ENCODE measurements at regions of chr16 and their contacts with region 1.

Region 1: GRCh38 chr16:75402821-75403475 is 30.4 kb downstream of the CFDP1 start:
- DNase-seq: peak in 3 of 35 experiments; percentile 6 to 55 (median 7)
- ATAC-seq: no peak
- H3K4me3 ChIP-seq: no peak overlapping the region
- H3K4me3 Mint-ChIP-seq: no peak overlapping the region
- H3K27ac ChIP-seq: no peak overlapping the region
- H3K27ac Mint-ChIP-seq: no peak overlapping the region
- H3K4me1 ChIP-seq: no peaks in the 10 kb centered on the region
- H3K4me1 Mint-ChIP-seq: peaks cover 0 to 4% (median 3%) of the 10 kb centered on the region in 3 donors
- H3K27me3 ChIP-seq: no peaks in the 10 kb centered on the region
- H3K27me3 Mint-ChIP-seq: no peaks in the 10 kb centered on the region

Region 2: DNA sequence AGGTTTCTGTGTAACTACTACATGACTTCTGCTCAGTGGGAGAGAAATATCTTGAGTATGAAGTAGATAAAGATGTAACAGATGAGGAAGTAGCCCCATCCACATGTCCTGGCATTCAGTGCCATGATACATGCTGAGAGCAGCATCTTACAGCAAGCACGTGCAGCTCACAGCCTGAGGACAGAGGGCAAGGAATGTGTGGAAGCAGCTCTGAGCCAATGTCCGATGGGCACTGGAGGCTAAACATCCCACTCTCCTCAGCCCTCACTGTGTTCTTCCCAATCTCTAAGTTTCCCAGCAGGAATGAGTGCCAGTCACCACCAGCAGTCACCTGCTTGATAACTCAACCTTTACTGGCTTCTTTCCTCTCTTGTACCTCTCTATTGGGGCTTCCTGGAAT is 10.0 kb before region 1 on chr16:
- CTCF ChIA-PET with region 1: interaction called, 3 to 6 read pairs
- POLR2A ChIA-PET with region 1: interaction called in 1 of 2 experiments, 12 read pairs
- DNase-seq: no peak
- ATAC-seq: no peak
- H3K4me3 ChIP-seq: no peak overlapping the region
- H3K4me3 Mint-ChIP-seq: no peak overlapping the region
- H3K27ac ChIP-seq: no peak overlapping the region
- H3K27ac Mint-ChIP-seq: no peak overlapping the region
- H3K4me1 ChIP-seq: no peaks in the 10 kb centered on the region
- H3K4me1 Mint-ChIP-seq: peaks cover 0 to 10% (median 2%) of the 10 kb centered on the region in 3 donors
- H3K27me3 ChIP-seq: no peaks in the 10 kb centered on the region
- H3K27me3 Mint-ChIP-seq: no peaks in the 10 kb centered on the region

Region 3: DNA sequence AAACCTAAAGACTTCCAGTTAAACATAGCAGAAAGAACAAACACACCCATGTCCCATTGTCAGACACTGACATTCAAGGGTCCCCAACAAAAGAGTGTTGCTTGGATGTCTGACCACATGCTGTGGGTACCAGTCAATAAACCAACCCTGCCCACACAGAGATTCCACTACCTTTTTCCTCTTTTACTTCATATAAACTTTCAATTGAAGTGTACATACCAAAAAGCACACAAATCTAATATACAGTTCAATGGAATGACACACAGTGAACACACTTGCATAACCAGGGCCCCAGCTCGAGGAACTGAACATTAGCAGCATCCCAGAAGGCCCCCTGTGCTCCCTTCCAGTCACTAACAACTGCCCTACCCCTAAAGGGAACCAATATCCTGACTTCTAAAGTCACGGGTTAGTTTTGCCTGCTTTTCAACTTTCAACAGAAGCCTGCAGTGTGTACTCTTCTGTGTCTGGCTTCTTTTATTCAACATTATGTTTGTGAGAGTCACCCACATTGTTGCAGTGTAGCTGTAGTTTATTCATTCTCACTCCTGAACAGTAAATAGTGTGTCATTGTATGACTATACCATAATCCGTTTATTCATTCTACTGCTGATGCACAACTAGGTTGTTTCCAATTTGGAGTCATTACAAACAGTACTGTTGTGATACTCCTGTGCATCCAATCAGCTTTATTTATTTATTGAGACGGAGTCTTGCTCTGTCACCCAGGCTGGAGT is 12.4 kb after region 1 on chr16:
- CTCF ChIA-PET with region 1: interaction called, 3 to 5 read pairs
- POLR2A ChIA-PET with region 1: interaction called, 5 to 10 read pairs
- DNase-seq: no peak
- ATAC-seq: no peak
- H3K4me3 ChIP-seq: no peak overlapping the region
- H3K4me3 Mint-ChIP-seq: no peak overlapping the region
- H3K27ac ChIP-seq: no peak overlapping the region
- H3K27ac Mint-ChIP-seq: no peak overlapping the region
- H3K4me1 ChIP-seq: no peaks in the 10 kb centered on the region
- H3K4me1 Mint-ChIP-seq: peaks cover 23 to 31% (median 28%) of the 10 kb centered on the region in 3 donors
- H3K27me3 ChIP-seq: no peaks in the 10 kb centered on the region
- H3K27me3 Mint-ChIP-seq: no peaks in the 10 kb centered on the region

Region 4: GRCh38 chr16:75483222-75483621 is 80.3 kb after region 1 on chr16:
- CTCF ChIA-PET with region 1: no interaction called
- POLR2A ChIA-PET with region 1: no interaction called
- DNase-seq: no peak
- ATAC-seq: no peak
- H3K4me3 ChIP-seq: no peak overlapping the region
- H3K4me3 Mint-ChIP-seq: no peak overlapping the region
- H3K27ac ChIP-seq: no peak overlapping the region
- H3K27ac Mint-ChIP-seq: no peak overlapping the region
- H3K4me1 ChIP-seq: no peaks in the 10 kb centered on the region
- H3K4me1 Mint-ChIP-seq: no peaks in the 10 kb centered on the region
- H3K27me3 ChIP-seq: peaks cover 0 to 27% of the 10 kb centered on the region in 2 experiments
- H3K27me3 Mint-ChIP-seq: peaks cover 13 to 24% of the 10 kb centered on the region in 2 donors